Activated T-helper 1 cell treated with anti-CD3 and anti-CD28 coated beads, Interleukin-12 subunit alpha, Interleukin-12 subunit beta, Interleukin-2, Interleukin-4 antibody, amounts not matched to agents 30 ng/mL and 10 ng/mL and 1 ng/mL, durations not matched to agents 14 hours and 24 hours and 36 hours (primary cell): ENCODE measurements at regions of chr2 and their contacts with region 1.

Region 1: GRCh38 chr2:9782197-9782719 is 61.0 kb upstream of the TAF1B start:
- DNase-seq: peak; percentile 76
- H3K4me3 Mint-ChIP-seq: peak overlapping the region; percentile 66
- H3K27ac Mint-ChIP-seq: peak overlapping the region; percentile 84
- H3K4me1 Mint-ChIP-seq: peaks cover 66% of the 10 kb centered on the region
- H3K27me3 Mint-ChIP-seq: no peaks in the 10 kb centered on the region

Region 2: DNA sequence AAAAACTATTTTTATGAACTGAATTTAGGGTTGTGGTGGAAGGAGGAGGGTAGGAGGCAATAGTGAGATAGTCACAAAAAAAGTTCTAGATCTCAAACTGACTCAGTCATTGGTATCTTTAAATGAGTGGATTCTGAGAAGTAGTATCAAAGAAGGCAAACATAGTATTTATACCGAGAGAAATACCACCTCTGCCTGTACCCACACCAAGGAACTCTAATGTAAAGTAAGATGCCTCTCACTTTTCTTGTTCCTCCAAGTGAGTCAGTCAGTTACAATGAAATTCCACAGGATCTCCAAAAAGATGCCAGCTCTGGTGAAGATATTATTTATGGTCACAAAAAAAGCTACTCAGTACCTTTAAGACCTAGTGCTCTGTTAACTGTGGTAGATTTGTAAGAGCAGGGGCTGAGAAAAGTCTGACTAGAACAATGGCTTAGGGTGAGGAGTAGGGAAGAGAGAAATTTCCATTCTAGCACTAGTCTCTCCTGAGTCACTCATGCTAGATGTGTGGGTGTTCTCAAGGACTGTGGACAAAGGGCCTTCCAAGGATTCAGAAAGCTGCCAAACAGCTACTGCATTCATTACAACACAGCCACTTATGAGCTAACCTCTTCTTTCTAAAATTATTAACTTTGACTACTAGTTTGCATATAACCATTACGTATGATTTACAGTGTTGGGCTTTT is 187.7 kb before region 1 on chr2:
- intact Hi-C with region 1: loop called (anchors 1 kb)
- DNase-seq: no peak
- H3K4me3 Mint-ChIP-seq: peak overlapping the region; percentile 28
- H3K27ac Mint-ChIP-seq: peak overlapping the region; percentile 85
- H3K4me1 Mint-ChIP-seq: peaks cover 71% of the 10 kb centered on the region
- H3K27me3 Mint-ChIP-seq: no peaks in the 10 kb centered on the region

Region 3: DNA sequence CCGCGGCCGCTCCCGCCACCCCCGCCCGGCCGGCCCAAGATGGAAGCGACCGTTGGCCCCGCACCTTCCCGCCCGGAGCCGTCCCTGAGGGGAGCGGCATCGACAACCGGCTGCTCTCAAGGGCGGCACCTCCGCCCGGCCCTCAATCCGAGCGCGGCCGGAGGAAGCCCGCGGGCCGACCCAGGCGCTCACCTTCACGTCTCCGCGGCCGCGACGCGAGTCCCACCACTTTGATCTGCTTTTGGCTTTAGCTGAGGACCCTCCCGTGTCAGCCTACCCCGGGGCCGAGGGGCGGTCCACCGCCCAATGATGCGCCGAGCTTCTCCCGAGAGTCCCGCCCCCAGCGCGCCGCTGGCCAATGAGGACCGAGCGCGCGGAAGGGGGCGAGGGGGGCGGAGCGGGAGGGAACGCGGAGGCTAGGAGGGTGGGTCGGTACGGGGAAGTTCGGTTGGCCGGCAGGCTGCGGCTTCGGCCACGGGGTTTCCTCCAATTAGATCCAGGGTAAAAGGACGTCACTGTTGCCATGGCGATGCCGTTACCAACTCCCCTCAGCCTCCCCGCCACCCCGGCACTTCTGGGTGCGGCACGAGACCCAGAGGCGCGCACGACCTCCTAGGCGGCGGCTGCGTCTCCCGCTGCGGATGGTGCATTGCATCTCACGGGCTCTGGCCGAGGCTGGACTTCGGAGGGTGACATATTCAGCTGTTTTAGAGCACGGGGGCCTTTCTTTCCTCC is 151.3 kb before region 1 on chr2 and contains the start of gene YWHAQ:
- intact Hi-C with region 1: loop called (anchors 1 kb)
- DNase-seq: peak; percentile 97
- H3K4me3 Mint-ChIP-seq: peak within 1 kb of the TSS; percentile 97
- H3K27ac Mint-ChIP-seq: peak within 1 kb of the TSS; percentile 93
- H3K4me1 Mint-ChIP-seq: peaks cover 45% of the 10 kb centered on the region
- H3K27me3 Mint-ChIP-seq: peaks cover 9% of the 10 kb centered on the region
- total RNA-seq, gene YWHAQ: 290 and 311 TPM in 2 replicates

Region 4: GRCh38 chr2:9703085-9703641 is 79.1 kb before region 1 on chr2:
- intact Hi-C with region 1: loop called (anchors 1 kb)
- DNase-seq: peak; percentile 79
- H3K4me3 Mint-ChIP-seq: no peak overlapping the region
- H3K27ac Mint-ChIP-seq: peak overlapping the region; percentile 74
- H3K4me1 Mint-ChIP-seq: peaks cover 48% of the 10 kb centered on the region
- H3K27me3 Mint-ChIP-seq: no peaks in the 10 kb centered on the region

Region 5: GRCh38 chr2:9799665-9800632 is 17.7 kb after region 1 on chr2:
- intact Hi-C with region 1: loop called (anchors 1 kb)
- DNase-seq: peak; percentile 81
- H3K4me3 Mint-ChIP-seq: peak overlapping the region; percentile 66
- H3K27ac Mint-ChIP-seq: peak overlapping the region; percentile 85
- H3K4me1 Mint-ChIP-seq: peaks cover 37% of the 10 kb centered on the region
- H3K27me3 Mint-ChIP-seq: peaks cover 7% of the 10 kb centered on the region

Region 6: GRCh38 chr2:9951272-9951972 is 169.2 kb after region 1 on chr2 and contains the start of gene GRHL1:
- intact Hi-C with region 1: loop called (anchors 1 kb)
- DNase-seq: peak; percentile 92
- H3K4me3 Mint-ChIP-seq: peak within 1 kb of the TSS; percentile 85
- H3K27ac Mint-ChIP-seq: peak within 1 kb of the TSS; percentile 82
- H3K4me1 Mint-ChIP-seq: peaks cover 24% of the 10 kb centered on the region
- H3K27me3 Mint-ChIP-seq: peaks cover 54% of the 10 kb centered on the region
- total RNA-seq, gene GRHL1: 1.4 and 1.5 TPM in 2 replicates